PC-9 (cell line): ENCODE measurements at regions of chr4 and their contacts with region 1.

Region 1: GRCh38 chr4:18138076-18138665 is 116.6 kb upstream of the LCORL start:
- DNase-seq: no peak
- H3K4me3 ChIP-seq: no peak overlapping the region
- H3K27ac ChIP-seq: no peak overlapping the region
- H3K4me1 ChIP-seq: no peaks in the 10 kb centered on the region
- H3K27me3 ChIP-seq: no peaks in the 10 kb centered on the region
- CTCF ChIP-seq: no peak

Region 2: DNA sequence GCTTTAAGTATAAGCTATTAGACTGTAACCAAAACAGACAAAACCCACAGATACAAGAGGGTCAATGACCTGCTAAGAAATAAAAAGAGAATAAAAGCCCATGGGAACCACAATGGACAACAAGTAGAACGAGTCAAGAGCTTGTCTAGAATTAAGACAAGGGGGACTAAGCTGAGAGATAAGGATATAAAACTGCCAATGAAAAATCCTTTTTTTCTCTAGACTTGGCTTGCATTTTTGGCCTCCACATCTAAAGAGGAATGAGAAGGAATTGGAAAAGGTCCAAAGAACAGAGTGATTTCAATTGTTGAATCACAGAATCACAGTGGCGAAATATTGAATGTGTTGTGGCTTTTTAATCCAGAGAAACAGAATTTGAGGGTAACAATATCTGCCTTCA is 762.0 kb before region 1 on chr4:
- CTCF ChIA-PET with region 1: no interaction called
- POLR2A ChIA-PET with region 1: interaction called, 21 read pairs
- intact Hi-C with region 1: no loop called
- DNase-seq: no peak
- H3K4me3 ChIP-seq: no peak overlapping the region
- H3K27ac ChIP-seq: no peak overlapping the region
- H3K4me1 ChIP-seq: no peaks in the 10 kb centered on the region
- H3K27me3 ChIP-seq: no peaks in the 10 kb centered on the region; the same call in 1 of the 2 replicates
- CTCF ChIP-seq: no peak

Region 3: GRCh38 chr4:17981063-17981462 is 157.1 kb before region 1 on chr4:
- CTCF ChIA-PET with region 1: no interaction called
- POLR2A ChIA-PET with region 1: interaction called, 13 read pairs
- intact Hi-C with region 1: no loop called
- DNase-seq: peak in 1 of 2 experiments; percentile 41
- H3K4me3 ChIP-seq: no peak overlapping the region
- H3K27ac ChIP-seq: no peak overlapping the region
- H3K4me1 ChIP-seq: no peaks in the 10 kb centered on the region
- H3K27me3 ChIP-seq: no peaks in the 10 kb centered on the region
- CTCF ChIP-seq: no peak

Region 4: DNA sequence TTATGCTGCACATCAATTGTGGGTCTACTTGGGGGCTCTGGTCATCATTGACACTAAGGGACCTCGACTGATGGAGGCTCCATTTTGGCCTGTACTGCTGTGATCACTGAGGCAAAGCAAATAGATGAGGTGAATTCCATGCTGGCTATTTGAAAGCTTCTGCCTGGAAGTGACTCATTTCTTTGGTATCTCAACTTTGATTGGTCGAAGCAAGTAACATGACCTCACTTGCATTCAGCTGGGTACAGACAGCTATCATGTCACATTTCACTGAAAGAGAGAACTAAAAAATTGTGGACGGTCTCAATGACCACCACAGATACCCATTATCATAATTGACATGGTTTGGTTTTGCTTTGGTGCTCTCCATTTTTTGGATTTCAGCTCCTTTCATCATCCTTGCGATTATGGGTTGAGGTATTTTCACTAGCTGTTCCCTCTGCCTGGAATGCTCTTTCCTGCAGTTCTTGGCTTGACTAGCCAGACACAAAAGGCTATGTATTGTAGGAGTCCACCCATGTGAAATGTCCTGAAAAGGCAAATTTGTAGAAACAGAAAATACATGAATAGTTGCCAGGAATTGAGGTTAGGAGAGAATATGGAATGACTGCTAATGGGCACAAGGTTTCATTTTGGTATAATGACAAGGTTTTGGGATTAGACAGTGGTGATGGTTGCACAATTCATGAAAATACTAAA is 252.6 kb after region 1 on chr4:
- CTCF ChIA-PET with region 1: no interaction called
- POLR2A ChIA-PET with region 1: no interaction called
- intact Hi-C with region 1: no loop called
- DNase-seq: no peak
- H3K4me3 ChIP-seq: no peak overlapping the region
- H3K27ac ChIP-seq: no peak overlapping the region
- H3K4me1 ChIP-seq: no peaks in the 10 kb centered on the region
- H3K27me3 ChIP-seq: no peaks in the 10 kb centered on the region
- CTCF ChIP-seq: no peak